Activated CD4-positive, alpha-beta T cell treated with anti-CD3 and anti-CD28 coated beads, Interleukin-2, amount 10 ng/mL, durations not matched to agents 24 days and 14 days (primary cell): ENCODE measurements at regions of chr2 and their contacts with region 1.

Region 1: DNA sequence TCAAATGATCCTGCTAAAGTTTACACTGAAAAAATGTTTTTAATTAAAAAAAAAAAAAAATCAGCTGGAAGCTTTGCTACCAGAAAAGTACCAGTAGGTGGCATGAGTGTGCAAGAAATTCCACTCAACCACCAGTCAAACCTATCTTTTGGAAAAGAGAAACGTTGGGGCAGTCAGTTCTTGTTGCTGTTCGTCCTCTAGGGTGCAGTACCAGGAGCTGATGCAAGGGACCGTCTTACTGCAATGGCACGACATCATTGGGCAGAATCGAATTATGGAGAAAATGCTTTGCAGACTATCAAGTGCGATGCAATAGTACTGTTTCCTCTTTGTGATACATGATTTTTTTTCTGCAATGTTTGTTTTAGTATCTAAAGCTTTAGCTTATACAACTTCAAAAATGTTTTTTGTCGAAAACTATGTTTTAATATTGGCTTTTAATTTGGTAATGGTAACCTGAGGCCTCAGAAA is 18.3 kb downstream of the YPEL5 start:
- DNase-seq: peak; percentile 91
- H3K4me3 Mint-ChIP-seq: no peak overlapping the region
- H3K27ac Mint-ChIP-seq: no peak overlapping the region
- H3K4me1 Mint-ChIP-seq: peaks cover 2% of the 10 kb centered on the region
- H3K27me3 Mint-ChIP-seq: peaks cover 2% of the 10 kb centered on the region

Region 2: DNA sequence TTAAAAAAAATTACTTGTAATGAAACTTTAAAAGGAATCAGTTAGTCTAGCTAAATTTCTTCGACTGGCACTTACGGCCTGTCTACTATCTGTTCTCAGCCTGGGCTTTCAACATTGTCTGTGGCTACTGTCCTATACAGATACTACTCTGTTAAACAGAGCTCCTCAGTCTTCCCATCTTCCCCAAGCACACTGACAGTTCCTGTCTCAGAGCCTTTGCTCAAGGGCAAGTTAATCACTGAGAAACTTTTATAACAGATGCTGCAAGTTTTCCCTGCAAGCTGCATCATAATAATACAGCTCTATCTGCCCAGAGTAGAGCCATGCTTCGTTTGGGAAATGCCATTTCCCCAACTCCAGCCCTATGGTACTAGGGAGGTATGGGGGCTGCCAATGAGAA is 29.5 kb before region 1 on chr2:
- intact Hi-C with region 1: no loop called
- DNase-seq: no peak
- H3K4me3 Mint-ChIP-seq: no peak overlapping the region
- H3K27ac Mint-ChIP-seq: no peak overlapping the region
- H3K4me1 Mint-ChIP-seq: peaks cover 7% of the 10 kb centered on the region
- H3K27me3 Mint-ChIP-seq: peaks cover 7% of the 10 kb centered on the region

Region 3: DNA sequence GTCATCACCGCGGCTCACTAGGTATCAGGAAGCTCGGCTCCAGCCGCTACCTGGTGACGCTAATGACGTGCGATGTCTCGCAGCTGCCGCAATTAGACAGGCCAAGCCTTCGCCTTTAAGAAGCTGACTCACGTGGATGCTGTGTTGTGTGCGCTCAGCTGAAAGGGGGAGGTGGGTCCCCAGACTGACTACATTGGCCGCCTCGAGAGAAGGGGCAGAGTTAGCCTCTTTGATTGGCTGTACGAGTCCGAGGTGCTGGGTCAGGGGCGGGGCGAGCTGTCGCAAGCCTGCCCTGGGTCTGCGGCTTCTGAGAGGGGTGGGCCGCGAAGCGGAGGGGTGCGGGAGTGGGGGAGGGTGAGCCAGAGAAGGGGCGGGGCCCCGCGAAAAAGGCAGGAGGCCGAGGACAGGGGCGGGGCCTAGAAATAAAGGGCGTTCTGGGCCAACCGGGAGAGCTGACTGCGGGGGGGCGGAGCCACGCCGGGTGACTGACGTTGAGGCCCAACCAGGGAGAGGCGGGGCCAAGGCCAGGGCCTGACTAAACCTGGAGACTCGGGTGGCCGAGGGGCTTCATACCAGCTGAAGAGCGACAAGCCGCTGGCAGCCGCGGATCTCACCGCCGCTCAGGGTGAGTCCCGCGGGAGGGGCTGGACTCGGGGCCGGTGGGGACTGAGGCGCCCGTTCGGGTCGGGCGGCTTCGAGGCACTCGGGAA is 18.5 kb before region 1 on chr2 and contains the start of gene YPEL5:
- intact Hi-C with region 1: loop called (anchors 2 kb)
- DNase-seq: peak; percentile 100
- H3K4me3 Mint-ChIP-seq: peak within 1 kb of the TSS; percentile 87
- H3K27ac Mint-ChIP-seq: peak within 1 kb of the TSS; percentile 97
- H3K4me1 Mint-ChIP-seq: peaks cover 32% of the 10 kb centered on the region
- H3K27me3 Mint-ChIP-seq: no peaks in the 10 kb centered on the region
- total RNA-seq, gene YPEL5: 16.8 and 19.6 TPM in 2 replicates

Region 4: DNA sequence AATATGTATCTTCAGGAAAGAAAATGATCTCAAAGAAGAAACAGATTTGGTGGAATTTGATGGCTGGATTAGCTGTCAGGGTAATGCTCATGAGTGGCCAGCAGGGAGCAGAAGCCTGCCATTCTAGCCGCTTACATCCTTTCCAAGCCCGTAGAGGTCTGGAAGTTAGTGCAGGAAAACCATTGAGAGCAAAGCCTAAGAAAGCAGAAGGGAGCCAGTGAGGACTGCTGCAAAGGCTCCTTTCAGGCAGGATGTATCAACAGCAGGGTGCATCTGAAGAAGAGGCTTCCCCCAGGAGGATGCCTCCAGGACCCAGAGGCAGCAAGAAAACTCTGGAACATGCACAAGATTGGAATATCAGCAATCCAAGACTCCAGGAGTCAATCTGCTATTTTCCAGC is 43.4 kb after region 1 on chr2:
- intact Hi-C with region 1: loop called (anchors 2 kb)
- DNase-seq: peak; percentile 75
- H3K4me3 Mint-ChIP-seq: no peak overlapping the region
- H3K27ac Mint-ChIP-seq: no peak overlapping the region
- H3K4me1 Mint-ChIP-seq: peaks cover 13% of the 10 kb centered on the region
- H3K27me3 Mint-ChIP-seq: peaks cover 9% of the 10 kb centered on the region

Region 5: GRCh38 chr2:30862054-30862651 is 697.1 kb after region 1 on chr2:
- intact Hi-C with region 1: loop called (anchors 10 kb)
- DNase-seq: peak; percentile 76
- H3K4me3 Mint-ChIP-seq: no peak overlapping the region
- H3K27ac Mint-ChIP-seq: no peak overlapping the region
- H3K4me1 Mint-ChIP-seq: peaks cover 6% of the 10 kb centered on the region
- H3K27me3 Mint-ChIP-seq: peaks cover 5% of the 10 kb centered on the region

Region 6: DNA sequence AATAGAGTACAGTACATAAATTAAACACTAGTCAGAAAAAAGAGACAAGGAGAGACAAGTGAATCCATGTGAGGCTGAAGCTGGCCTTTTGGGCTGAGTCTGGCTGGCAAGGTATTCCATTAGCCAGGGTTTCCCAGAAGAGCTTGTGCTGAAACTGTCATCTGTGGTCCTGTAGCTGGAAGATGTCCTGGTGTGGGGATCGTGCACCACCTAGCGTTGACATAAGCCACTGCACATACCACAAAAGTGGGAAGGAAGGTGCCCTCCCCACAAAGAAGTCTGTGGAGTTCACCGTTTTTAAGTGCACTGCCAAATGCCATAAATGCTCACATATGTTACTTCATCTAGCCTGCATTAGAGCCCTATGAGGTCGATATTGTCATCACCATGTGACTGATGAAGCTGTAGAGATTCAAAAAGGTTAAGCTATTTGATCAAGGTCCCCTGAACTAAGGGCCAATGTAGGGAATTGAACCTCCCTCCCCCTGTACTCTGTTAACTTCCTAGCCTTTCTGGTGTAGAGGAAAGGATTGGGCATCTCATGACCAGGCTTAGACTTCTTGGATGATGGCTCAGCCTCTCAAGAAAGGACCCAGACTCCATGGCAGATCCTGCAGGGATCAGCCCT is 1005.1 kb after region 1 on chr2:
- intact Hi-C with region 1: loop called (anchors 5 kb)
- DNase-seq: peak; percentile 85
- H3K4me3 Mint-ChIP-seq: no peak overlapping the region
- H3K27ac Mint-ChIP-seq: no peak overlapping the region
- H3K4me1 Mint-ChIP-seq: peaks cover under 1% of the 10 kb centered on the region
- H3K27me3 Mint-ChIP-seq: peaks cover 2% of the 10 kb centered on the region

Region 7: DNA sequence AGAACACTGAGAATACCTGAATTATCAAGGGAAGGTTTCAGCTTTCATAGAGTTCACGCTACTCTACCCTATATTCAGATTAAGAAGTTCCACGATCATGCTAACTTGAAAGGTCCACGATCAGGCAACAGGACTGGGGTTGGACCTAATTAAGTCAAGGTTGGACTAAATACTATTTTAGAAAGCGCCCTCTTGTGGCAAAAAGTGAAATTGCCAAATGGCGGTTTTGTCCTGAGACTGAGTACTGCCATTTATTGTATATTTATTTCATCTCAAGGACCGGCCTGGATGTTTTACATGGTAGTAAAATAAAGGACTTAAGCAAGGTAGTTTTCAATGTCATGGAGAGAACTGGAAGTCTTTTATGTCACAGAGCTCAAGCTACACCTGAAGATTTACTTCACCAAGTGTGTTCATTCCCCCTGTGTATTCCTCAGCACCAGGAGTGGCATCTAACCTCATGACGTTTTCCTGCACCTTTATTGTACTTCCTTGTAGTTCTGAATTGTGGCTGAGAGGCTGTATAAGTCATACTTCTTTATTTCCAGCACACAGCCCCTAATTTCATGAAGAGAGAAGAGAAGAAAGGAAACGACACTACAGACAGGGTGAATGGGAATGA is 1358.9 kb after region 1 on chr2:
- intact Hi-C with region 1: loop called (anchors 10 kb)
- DNase-seq: peak; percentile 86
- H3K4me3 Mint-ChIP-seq: no peak overlapping the region
- H3K27ac Mint-ChIP-seq: no peak overlapping the region
- H3K4me1 Mint-ChIP-seq: no peaks in the 10 kb centered on the region
- H3K27me3 Mint-ChIP-seq: peaks cover 4% of the 10 kb centered on the region